Psoas muscle (tissue), 8 donors: ENCODE measurements at regions of chr1 and their contacts with region 1.

Region 1: GRCh38 chr1:23249787-23250454 is 32.6 kb upstream of the HTR1D start:
- DNase-seq: no peak
- ATAC-seq: no peak
- H3K4me3 ChIP-seq: no peak overlapping the region
- H3K27ac ChIP-seq: no peak overlapping the region
- H3K4me1 ChIP-seq: no peaks in the 10 kb centered on the region
- H3K27me3 ChIP-seq: no peaks in the 10 kb centered on the region
- CTCF ChIP-seq: no peak

Region 2: DNA sequence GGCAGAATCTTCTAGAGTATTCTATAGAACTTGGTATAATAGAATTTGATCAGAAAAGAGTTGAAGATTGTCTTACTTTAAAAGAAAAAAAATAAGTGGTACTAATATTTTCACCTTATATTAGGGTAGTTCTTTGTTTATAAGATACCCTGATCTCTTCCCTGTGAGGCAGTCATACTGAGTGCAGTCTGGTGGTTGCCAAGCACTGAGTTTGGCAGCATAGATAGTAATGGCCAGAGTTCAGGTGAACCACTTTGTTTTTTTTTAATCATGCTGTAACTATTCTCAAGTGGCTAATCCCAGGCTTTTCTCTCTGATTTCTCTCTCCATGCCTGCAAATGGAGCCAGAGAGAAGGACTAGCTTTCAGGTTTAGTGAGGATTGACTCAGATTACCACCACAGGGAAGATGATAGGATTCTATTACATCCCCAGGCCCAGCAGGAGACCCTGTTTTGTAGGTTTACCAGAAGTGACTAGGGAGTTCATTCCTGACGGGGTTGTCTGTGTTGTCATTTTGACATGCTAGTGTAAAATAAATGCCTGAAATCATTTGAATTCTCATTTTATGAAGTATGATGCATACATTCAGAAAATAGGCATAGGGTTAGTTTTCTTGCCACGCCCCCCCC is 214.0 kb before region 1 on chr1:
- intact Hi-C with region 1: no loop called
- DNase-seq: no peak
- ATAC-seq: peak in 1 of 4 donors; percentile 30
- H3K4me3 ChIP-seq: no peak overlapping the region
- H3K27ac ChIP-seq: no peak overlapping the region
- H3K4me1 ChIP-seq: peaks cover 6% of the 10 kb centered on the region
- H3K27me3 ChIP-seq: no peaks in the 10 kb centered on the region
- CTCF ChIP-seq: no peak

Region 3: GRCh38 chr1:23216771-23217420 is 33.0 kb before region 1 on chr1:
- intact Hi-C with region 1: no loop called
- DNase-seq: peak in 1 of 2 donors; percentile 19
- ATAC-seq: peak in 1 of 4 donors; percentile 46
- H3K4me3 ChIP-seq: peak overlapping the region; percentile 60
- H3K27ac ChIP-seq: no peak overlapping the region
- H3K4me1 ChIP-seq: no peaks in the 10 kb centered on the region
- H3K27me3 ChIP-seq: peaks cover 2 to 68% (median 13%) of the 10 kb centered on the region in 3 donors
- CTCF ChIP-seq: peak; percentile 53

Region 4: DNA sequence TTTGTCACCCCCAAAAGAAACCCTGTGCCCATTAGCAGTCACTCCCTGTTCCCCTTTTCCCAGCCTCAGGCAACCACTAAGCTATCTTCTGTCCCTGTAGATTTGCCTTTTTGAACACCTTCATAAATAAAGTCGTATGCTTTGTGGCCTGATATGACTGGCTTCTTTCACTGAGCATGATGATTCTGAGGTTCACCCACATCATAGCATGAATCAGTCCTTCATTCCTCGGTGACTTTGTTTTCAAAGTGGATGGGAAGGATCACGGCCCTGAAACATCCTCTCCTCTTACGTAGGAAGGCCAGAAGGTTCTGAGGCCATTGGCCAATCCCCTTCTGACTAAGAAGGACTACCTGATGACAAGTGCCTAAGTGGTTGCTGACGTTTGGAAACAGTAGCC is 1204.8 kb after region 1 on chr1:
- intact Hi-C with region 1: loop called in 1 of 2 experiments (anchors 5 kb)
- DNase-seq: no peak
- ATAC-seq: no peak
- H3K4me3 ChIP-seq: no peak overlapping the region
- H3K27ac ChIP-seq: no peak overlapping the region
- H3K4me1 ChIP-seq: no peaks in the 10 kb centered on the region
- H3K27me3 ChIP-seq: no peaks in the 10 kb centered on the region
- CTCF ChIP-seq: no peak